A673 (cell line): ENCODE measurements at regions of chr5 and their contacts with region 1.

Region 1: GRCh38 chr5:130871346-130872086 is 293.5 kb downstream of the HINT1 start:
- DNase-seq: peak; percentile 59
- H3K4me3 ChIP-seq: no peak overlapping the region
- H3K27ac ChIP-seq: no peak overlapping the region
- H3K4me1 ChIP-seq: no peaks in the 10 kb centered on the region
- H3K27me3 ChIP-seq: peaks cover 4% of the 10 kb centered on the region
- CTCF ChIP-seq: peak; percentile 68

Region 2: DNA sequence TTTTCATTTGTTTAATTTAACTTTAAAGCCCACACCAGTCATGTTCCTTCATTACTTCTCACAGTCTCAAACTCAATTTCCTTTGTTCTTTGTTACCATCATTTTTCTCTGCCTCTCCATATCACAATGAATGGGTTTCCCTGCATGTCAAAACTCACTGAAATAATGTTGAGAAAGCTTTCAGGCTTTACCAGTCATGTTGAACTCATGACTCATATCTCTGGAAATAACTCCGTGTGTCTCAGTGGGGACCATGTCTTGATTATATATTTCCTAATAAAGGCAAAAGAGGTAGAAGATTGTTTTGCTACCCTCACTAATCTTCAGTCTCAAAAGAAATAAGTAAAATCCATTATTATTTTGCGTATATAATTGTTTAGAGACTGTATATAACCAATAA is 736.0 kb before region 1 on chr5:
- CTCF ChIA-PET with region 1: no interaction called
- POLR2A ChIA-PET with region 1: no interaction called
- intact Hi-C with region 1: no loop called
- DNase-seq: no peak
- H3K4me3 ChIP-seq: no peak overlapping the region
- H3K27ac ChIP-seq: no peak overlapping the region
- H3K4me1 ChIP-seq: no peaks in the 10 kb centered on the region
- H3K27me3 ChIP-seq: peaks cover 5% of the 10 kb centered on the region
- CTCF ChIP-seq: no peak

Region 3: DNA sequence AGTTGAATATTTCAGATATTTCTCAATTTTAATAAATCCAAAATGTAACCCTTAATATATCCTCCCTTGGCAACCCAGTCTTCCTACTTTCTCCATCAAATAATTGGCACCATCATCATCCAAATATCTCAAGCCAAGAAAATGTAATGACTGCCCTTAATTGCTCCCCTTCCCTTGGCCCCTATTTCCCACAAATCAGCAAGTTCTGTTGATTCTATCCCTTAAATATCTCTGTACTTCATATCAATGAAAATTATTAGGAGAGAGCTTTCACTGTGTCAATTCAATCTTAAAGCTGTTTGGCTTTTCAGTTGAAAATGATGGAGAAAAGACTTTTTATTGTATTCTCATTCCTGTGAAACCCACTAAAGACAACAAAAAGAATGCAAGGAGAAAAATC is 56.3 kb before region 1 on chr5:
- CTCF ChIA-PET with region 1: no interaction called
- POLR2A ChIA-PET with region 1: no interaction called
- intact Hi-C with region 1: no loop called
- DNase-seq: no peak
- H3K4me3 ChIP-seq: no peak overlapping the region
- H3K27ac ChIP-seq: no peak overlapping the region
- H3K4me1 ChIP-seq: no peaks in the 10 kb centered on the region
- H3K27me3 ChIP-seq: peaks cover 11% of the 10 kb centered on the region
- CTCF ChIP-seq: no peak

Region 4: GRCh38 chr5:131005963-131006684 is 134.6 kb after region 1 on chr5:
- CTCF ChIA-PET with region 1: interaction called, 7 read pairs
- POLR2A ChIA-PET with region 1: no interaction called
- intact Hi-C with region 1: loop called (anchors 2 kb)
- DNase-seq: peak; percentile 45
- H3K4me3 ChIP-seq: no peak overlapping the region
- H3K27ac ChIP-seq: no peak overlapping the region
- H3K4me1 ChIP-seq: no peaks in the 10 kb centered on the region
- H3K27me3 ChIP-seq: peaks cover 63% of the 10 kb centered on the region
- CTCF ChIP-seq: peak; percentile 43

Region 5: DNA sequence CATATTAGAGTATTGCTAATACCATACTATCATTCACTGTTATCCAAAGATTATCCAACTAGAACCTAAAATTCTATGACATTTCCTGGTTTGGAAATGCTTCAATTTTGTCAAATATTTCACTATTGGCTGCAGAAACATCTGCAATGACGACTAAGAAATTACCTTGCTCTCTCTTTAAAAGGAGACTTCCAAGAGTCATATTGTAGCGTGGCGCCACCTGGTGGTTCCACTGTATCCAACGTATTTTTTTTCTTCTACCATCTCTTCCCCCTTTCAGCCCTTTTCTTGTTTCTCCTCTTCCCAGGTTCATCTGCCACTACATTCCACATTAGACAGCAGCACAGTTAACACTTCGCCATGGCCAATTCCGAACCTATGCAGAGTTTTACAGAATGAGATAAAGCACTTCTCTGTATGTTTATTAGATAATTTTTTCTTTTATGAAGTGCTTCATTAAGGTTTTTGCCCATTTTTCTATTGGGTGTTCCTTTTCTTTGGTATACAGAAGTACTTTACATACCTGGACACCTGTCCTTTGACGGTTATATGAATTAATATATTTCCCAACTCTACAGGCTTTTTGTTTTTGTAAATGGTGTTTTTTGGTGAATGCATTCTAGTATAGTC is 545.8 kb after region 1 on chr5:
- CTCF ChIA-PET with region 1: no interaction called
- POLR2A ChIA-PET with region 1: no interaction called
- intact Hi-C with region 1: loop called (anchors 5 kb)
- DNase-seq: peak; percentile 80
- H3K4me3 ChIP-seq: no peak overlapping the region
- H3K27ac ChIP-seq: no peak overlapping the region
- H3K4me1 ChIP-seq: no peaks in the 10 kb centered on the region
- H3K27me3 ChIP-seq: no peaks in the 10 kb centered on the region
- CTCF ChIP-seq: peak; percentile 90